ENCODE measurements at regions of chr21 and their contacts with region 1.

Region 1: DNA sequence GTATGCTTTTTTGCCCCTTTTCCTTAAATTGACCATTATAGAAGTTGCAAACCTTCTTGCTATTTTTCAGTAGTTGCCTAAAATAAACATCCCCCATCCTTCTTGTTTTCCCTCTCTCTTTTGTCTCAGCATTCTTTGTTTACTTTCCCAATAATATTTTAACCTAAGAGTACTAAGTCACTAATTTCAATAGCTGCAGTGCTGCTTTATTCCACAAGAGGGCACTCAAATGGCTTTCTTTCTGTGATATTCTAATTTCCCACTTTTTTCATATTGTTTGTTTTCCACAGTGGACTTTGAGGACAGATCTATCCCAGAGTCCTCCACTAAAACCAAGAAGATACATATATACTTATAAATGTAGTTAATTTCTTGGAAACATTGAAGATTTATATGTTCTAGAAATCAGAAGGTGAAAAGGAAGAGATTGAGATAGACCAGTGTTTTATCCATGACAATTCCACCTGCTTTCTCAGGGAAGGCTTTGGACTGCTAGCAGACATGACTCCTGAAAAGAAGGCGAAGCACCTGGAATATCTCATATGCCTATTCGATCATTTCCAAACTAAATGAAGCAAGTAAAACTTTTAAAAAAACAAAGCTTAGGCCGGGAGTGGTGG is 104.8 kb upstream of the GRIK1 start:
- DNase-seq: no peak
- H3K4me3 ChIP-seq: no peak overlapping the region
- CTCF ChIP-seq: no peak
- POLR2A ChIP-seq: no peak

Region 2: GRCh38 chr21:30194701-30195299 is 150.2 kb after region 1 on chr21:
- intact Hi-C with region 1: loop called (anchors 10 kb)
- DNase-seq: no peak
- H3K4me3 ChIP-seq: no peak overlapping the region
- CTCF ChIP-seq: no peak
- POLR2A ChIP-seq: no peak